Activated T-helper 1 cell treated with anti-CD3 and anti-CD28 coated beads, Interleukin-12 subunit alpha, Interleukin-12 subunit beta, Interleukin-2, Interleukin-4 antibody, amounts not matched to agents 30 ng/mL and 10 ng/mL and 1 ng/mL, durations not matched to agents 14 hours and 24 hours and 36 hours (primary cell): ENCODE measurements at regions of chr6 and their contacts with region 1.

Region 1: GRCh38 chr6:134288538-134289203 is 29.2 kb downstream of the SGK1 start:
- DNase-seq: no peak
- H3K4me3 Mint-ChIP-seq: peak overlapping the region; percentile 72
- H3K27ac Mint-ChIP-seq: peak overlapping the region; percentile 96
- H3K4me1 Mint-ChIP-seq: peaks cover 38% of the 10 kb centered on the region
- H3K27me3 Mint-ChIP-seq: peaks cover 2% of the 10 kb centered on the region

Region 2: GRCh38 chr6:133952815-133953633 is 335.6 kb before region 1 on chr6 and contains the start of gene TBPL1:
- intact Hi-C with region 1: loop called (anchors 10 kb)
- DNase-seq: peak; percentile 76
- H3K4me3 Mint-ChIP-seq: peak within 1 kb of the TSS; percentile 95
- H3K27ac Mint-ChIP-seq: peak within 1 kb of the TSS; percentile 90
- H3K4me1 Mint-ChIP-seq: peaks cover 48% of the 10 kb centered on the region
- H3K27me3 Mint-ChIP-seq: peaks cover 10% of the 10 kb centered on the region
- total RNA-seq, gene TBPL1: 40.5 and 42.2 TPM in 2 replicates

Region 3: DNA sequence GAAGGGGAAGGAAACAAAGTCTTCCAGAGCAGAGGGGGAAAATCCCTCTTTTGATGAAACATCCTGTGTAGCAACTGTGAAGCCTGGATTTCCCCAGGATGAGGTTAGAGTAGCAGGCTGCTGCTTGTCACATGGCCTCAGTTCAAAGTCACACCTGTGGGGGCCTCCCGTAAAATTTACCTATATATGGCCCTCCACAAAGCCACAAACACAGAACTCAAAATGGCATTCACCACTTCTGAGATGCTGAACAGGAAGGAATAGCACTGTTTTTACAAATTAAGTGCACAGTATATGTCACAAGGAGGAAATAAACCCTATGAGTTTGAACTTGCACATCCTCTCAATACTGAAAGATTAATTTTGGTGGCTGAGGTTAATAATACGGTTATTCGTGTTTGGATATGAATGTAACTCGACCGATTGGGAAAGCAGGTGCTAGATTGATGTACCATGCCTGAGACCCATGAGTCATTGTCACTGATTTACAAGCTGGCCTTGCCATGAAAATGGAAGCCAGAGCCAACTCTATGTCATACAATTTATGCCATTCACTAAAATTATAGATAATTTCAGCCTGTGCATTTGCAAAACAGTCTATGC is 41.3 kb before region 1 on chr6:
- intact Hi-C with region 1: loop called (anchors 1 kb)
- DNase-seq: peak; percentile 82
- H3K4me3 Mint-ChIP-seq: peak overlapping the region; percentile 37
- H3K27ac Mint-ChIP-seq: peak overlapping the region; percentile 91
- H3K4me1 Mint-ChIP-seq: peaks cover 58% of the 10 kb centered on the region
- H3K27me3 Mint-ChIP-seq: no peaks in the 10 kb centered on the region

Region 4: DNA sequence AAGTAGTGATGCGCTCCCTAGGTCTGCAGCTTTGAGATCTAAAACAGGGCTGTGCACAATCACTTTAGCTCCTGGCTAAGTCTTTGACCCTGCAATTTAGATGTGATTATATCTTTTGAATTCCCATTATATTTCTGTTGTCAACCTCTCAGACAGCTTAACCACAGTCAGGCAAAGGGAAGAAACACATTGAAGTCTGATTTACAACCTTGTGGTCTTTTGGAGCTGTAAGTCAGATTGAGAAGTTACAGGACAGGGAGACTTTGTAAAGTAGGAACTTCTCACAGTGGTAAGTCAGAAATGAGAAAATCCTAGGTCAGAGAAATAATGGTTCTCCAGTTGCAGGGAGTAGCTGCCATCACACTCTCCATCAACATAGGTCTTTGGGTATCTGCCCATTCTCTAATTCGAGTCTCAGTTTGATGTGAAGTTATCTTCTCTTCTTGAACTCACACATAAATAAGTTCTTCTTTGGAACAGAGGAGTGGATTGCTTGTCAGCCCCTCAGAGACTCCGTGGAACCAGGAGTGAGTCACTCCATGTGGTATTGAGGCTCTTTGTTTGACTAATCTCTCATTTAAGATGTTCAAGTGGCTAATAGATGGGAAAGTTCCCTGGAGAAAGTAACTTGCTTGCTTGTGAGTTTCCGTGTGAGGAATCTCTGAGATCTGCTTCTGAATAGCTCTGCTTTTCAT is 64.3 kb after region 1 on chr6:
- intact Hi-C with region 1: loop called (anchors 2 kb)
- DNase-seq: no peak
- H3K4me3 Mint-ChIP-seq: peak overlapping the region; percentile 77
- H3K27ac Mint-ChIP-seq: peak overlapping the region; percentile 49
- H3K4me1 Mint-ChIP-seq: peaks cover 30% of the 10 kb centered on the region
- H3K27me3 Mint-ChIP-seq: no peaks in the 10 kb centered on the region

Region 5: DNA sequence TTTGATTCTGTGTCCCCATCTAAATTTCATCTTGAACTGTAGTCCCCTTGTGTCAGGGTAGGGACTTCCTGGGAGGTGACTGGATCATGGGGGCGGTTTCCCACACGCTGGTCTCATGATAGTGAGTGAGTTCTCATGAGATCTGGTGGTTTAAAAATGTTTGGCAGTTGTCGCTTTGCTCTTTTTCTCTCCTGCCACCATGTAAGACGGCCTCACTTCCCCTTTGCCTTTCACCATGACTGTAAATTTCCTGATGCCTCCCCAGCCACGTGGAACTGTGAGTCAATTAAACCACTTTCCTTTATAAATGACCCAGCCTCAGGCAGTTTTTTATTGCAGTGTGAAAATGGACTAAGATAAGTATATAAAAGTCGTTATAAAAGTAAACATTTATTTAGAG is 109.8 kb after region 1 on chr6:
- intact Hi-C with region 1: loop called (anchors 1 kb)
- DNase-seq: no peak
- H3K4me3 Mint-ChIP-seq: no peak overlapping the region
- H3K27ac Mint-ChIP-seq: peak overlapping the region; percentile 21
- H3K4me1 Mint-ChIP-seq: peaks cover 26% of the 10 kb centered on the region
- H3K27me3 Mint-ChIP-seq: peaks cover 2% of the 10 kb centered on the region

Region 6: DNA sequence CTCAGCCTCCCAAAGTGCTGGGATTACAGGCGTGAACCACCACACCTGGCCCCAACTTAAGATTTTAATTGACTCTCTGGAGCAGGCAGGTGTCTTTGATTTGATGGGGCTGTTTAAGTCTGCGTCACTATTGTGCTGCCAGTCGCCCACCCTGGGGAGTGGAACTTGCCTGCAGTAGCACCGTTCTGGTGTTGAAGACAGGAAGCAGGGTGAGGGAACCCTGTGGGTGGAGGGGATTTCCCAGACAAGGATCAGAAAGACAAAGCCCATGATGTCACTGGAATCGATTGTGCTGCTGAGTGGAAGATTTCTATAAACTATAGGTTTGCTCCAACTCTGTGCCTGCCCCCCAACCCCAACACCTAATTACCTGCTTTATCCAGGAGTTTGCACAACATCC is 650.2 kb after region 1 on chr6:
- intact Hi-C with region 1: loop called (anchors 1 kb)
- DNase-seq: peak; percentile 41
- H3K4me3 Mint-ChIP-seq: no peak overlapping the region
- H3K27ac Mint-ChIP-seq: peak overlapping the region; percentile 5
- H3K4me1 Mint-ChIP-seq: peaks cover 39% of the 10 kb centered on the region
- H3K27me3 Mint-ChIP-seq: no peaks in the 10 kb centered on the region

Region 7: GRCh38 chr6:135128268-135128914 is 839.7 kb after region 1 on chr6:
- intact Hi-C with region 1: loop called (anchors 2 kb)
- DNase-seq: peak; percentile 53
- H3K4me3 Mint-ChIP-seq: peak overlapping the region; percentile 66
- H3K27ac Mint-ChIP-seq: peak overlapping the region; percentile 97
- H3K4me1 Mint-ChIP-seq: peaks cover 63% of the 10 kb centered on the region
- H3K27me3 Mint-ChIP-seq: no peaks in the 10 kb centered on the region